A549 (cell line): ENCODE measurements at regions of chr7 and their contacts with region 1.

Region 1: GRCh38 chr7:43439631-43440401 is 143.1 kb upstream of the STK17A start:
- DNase-seq: peak; percentile 67 to 75
- ATAC-seq: peak; percentile 89 to 97
- H3K4me3 ChIP-seq: no peak overlapping the region
- H3K27ac ChIP-seq: no peak overlapping the region
- H3K4me1 ChIP-seq: no peaks in the 10 kb centered on the region
- CTCF ChIP-seq: peak; percentile 80
- EP300 ChIP-seq: no peak
- POLR2A ChIP-seq: no peak
- RAD21 ChIP-seq: peak; percentile 71

Region 2: GRCh38 chr7:43417455-43417854 is 22.4 kb before region 1 on chr7:
- CTCF ChIA-PET with region 1: interaction called, 10 read pairs
- POLR2A ChIA-PET with region 1: no interaction called
- DNase-seq: no peak
- ATAC-seq: no peak
- H3K4me3 ChIP-seq: no peak overlapping the region
- H3K27ac ChIP-seq: no peak overlapping the region
- H3K4me1 ChIP-seq: no peaks in the 10 kb centered on the region
- CTCF ChIP-seq: no peak
- EP300 ChIP-seq: no peak
- POLR2A ChIP-seq: no peak
- RAD21 ChIP-seq: no peak

Region 3: DNA sequence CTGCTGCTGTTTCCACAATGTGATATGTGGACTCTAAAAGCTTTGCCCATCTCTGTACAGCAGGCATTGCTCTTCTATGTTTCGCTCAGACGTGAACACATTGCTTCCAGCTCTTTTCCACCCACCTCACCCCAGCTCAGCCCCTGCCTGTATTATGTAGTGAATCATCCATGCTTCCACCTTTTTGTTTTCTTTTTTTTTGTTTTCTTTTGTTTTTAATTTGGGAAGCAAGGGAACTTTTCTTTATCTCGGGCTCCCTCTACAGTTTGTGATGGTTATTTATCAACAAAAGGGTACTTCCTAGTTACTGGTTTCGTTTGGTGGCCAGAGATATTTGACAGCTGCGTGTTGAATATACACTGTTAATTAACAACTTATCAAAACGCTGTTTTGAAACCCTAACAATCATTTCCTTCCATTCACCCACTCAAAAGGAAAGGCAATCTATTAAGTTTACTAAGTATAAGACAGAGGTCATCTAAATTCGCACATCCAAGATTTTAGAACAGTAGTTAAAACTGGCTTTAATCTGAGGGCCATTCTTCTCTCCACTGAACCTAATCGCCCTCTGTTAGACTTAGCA is 15.2 kb after region 1 on chr7:
- CTCF ChIA-PET with region 1: interaction called, 27 read pairs
- POLR2A ChIA-PET with region 1: no interaction called
- DNase-seq: peak; percentile 22 to 38
- ATAC-seq: peak; percentile 56 to 63; a peak in 4 of 6 replicates
- H3K4me3 ChIP-seq: no peak overlapping the region
- H3K27ac ChIP-seq: no peak overlapping the region
- H3K4me1 ChIP-seq: no peaks in the 10 kb centered on the region
- CTCF ChIP-seq: peak; percentile 59
- EP300 ChIP-seq: no peak
- POLR2A ChIP-seq: no peak
- RAD21 ChIP-seq: peak; percentile 62 to 70

Region 4: DNA sequence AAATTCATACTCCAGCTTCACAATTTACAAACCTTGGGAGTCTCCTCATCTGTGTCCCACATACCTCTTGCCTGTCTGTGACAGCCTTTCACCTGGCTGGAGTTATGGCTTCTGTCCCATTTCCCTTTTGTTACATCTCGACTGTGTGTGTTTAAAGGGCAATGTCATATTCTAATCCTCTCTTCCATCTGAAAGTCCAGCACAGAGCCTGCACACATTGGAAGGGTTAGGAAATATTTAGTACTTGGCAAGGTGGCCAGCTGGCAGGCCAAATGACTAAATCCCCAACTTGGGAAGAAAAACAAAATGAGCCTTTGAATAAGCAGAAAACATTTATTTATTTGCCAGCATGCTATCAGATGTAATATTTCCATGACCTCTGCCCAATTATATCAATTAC is 23.0 kb after region 1 on chr7:
- CTCF ChIA-PET with region 1: interaction called, 10 read pairs
- POLR2A ChIA-PET with region 1: no interaction called
- DNase-seq: no peak
- ATAC-seq: no peak
- H3K4me3 ChIP-seq: no peak overlapping the region
- H3K27ac ChIP-seq: no peak overlapping the region
- H3K4me1 ChIP-seq: no peaks in the 10 kb centered on the region
- CTCF ChIP-seq: no peak
- EP300 ChIP-seq: no peak
- POLR2A ChIP-seq: no peak
- RAD21 ChIP-seq: no peak

Region 5: DNA sequence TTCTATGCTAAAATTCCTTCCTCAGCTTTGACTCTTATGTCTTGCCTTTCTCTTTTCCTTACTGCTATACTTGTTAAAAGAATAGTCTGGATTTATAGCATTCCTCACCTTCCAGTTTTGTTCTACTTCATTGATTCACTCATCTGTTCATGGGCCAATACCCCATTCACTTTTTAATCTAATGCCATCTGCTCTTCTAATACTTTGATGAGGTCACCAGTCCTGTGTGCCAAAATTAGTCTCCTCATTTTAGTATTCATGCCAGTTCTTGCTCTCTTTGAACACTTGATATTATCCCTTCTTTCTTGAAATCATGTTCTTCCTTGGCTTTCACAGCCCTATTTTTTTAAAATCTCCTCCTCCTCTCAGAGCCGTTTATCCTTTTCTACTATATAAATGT is 162.5 kb after region 1 on chr7:
- CTCF ChIA-PET with region 1: no interaction called
- POLR2A ChIA-PET with region 1: no interaction called
- DNase-seq: no peak
- ATAC-seq: no peak
- H3K4me3 ChIP-seq: no peak overlapping the region
- H3K27ac ChIP-seq: no peak overlapping the region
- H3K4me1 ChIP-seq: no peaks in the 10 kb centered on the region
- CTCF ChIP-seq: no peak
- EP300 ChIP-seq: no peak
- POLR2A ChIP-seq: no peak
- RAD21 ChIP-seq: no peak

Region 6: GRCh38 chr7:43692582-43693373 is 253.0 kb after region 1 on chr7:
- CTCF ChIA-PET with region 1: no interaction called
- POLR2A ChIA-PET with region 1: no interaction called
- DNase-seq: peak; percentile 24 to 36
- ATAC-seq: peak; percentile 58 to 62
- H3K4me3 ChIP-seq: no peak overlapping the region
- H3K27ac ChIP-seq: peak overlapping the region; percentile 64 to 85
- H3K4me1 ChIP-seq: peaks cover 56% of the 10 kb centered on the region
- CTCF ChIP-seq: no peak
- EP300 ChIP-seq: no peak
- POLR2A ChIP-seq: no peak
- RAD21 ChIP-seq: no peak